ENCODE measurements at regions of chr17 and their contacts with region 1.

Region 1: GRCh38 chr17:39636927-39637736 is at the start of gene STARD3:
- DNase-seq: peak; percentile 88
- H3K4me3 ChIP-seq: peak within 1 kb of the TSS; percentile 90 to 96 (median 91)
- H3K27ac ChIP-seq: peak within 1 kb of the TSS; percentile 75
- H3K4me1 ChIP-seq: peaks cover 14% of the 10 kb centered on the region
- H3K27me3 ChIP-seq: peaks cover 0 to 3% of the 10 kb centered on the region in 2 experiments
- CTCF ChIP-seq: peak in 1 of 2 donors; percentile 5
- POLR2A ChIP-seq: peak; percentile 61
- total RNA-seq, gene STARD3: 48.9 and 51.0 TPM in 2 replicates

Region 2: DNA sequence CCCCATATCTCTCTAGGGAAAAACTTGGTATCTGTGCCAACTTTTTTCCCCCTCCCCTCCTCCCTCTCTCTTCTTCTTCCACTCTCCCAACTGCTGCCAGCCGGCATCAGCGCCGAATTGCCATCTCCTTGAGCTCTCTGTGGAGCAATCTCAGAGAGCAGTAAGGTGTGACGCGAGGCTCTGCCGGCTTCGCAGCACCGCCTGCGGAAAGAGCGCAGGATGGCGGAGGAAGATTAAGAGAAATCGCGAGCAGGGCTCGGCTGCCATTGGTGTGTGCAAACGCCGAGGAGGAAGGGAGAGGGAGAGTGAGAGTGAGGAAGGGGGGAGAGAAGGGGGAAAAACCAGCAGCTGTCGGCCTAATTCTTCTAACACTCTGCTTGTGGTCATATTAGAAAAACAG is 73.7 kb before region 1 on chr17:
- CTCF ChIA-PET with region 1: no interaction called
- POLR2A ChIA-PET with region 1: no interaction called
- dilution Hi-C with region 1: no loop called
- intact Hi-C with region 1: no loop called
- DNase-seq: peak; percentile 14
- H3K4me3 ChIP-seq: no peak overlapping the region
- H3K27ac ChIP-seq: no peak overlapping the region
- H3K4me1 ChIP-seq: no peaks in the 10 kb centered on the region
- H3K27me3 ChIP-seq: no peaks in the 10 kb centered on the region
- CTCF ChIP-seq: no peak
- POLR2A ChIP-seq: no peak

Region 3: GRCh38 chr17:39738931-39739884 is 102.1 kb after region 1 on chr17:
- CTCF ChIA-PET with region 1: no interaction called
- POLR2A ChIA-PET with region 1: no interaction called
- dilution Hi-C with region 1: loop called (anchors 10 kb)
- intact Hi-C with region 1: no loop called
- DNase-seq: no peak
- H3K4me3 ChIP-seq: no peak overlapping the region
- H3K27ac ChIP-seq: no peak overlapping the region
- H3K4me1 ChIP-seq: peaks cover 14% of the 10 kb centered on the region
- H3K27me3 ChIP-seq: peaks cover 18 to 28% of the 10 kb centered on the region in 2 experiments
- CTCF ChIP-seq: no peak
- POLR2A ChIP-seq: no peak

Region 4: GRCh38 chr17:39754161-39754951 is 117.2 kb after region 1 on chr17:
- CTCF ChIA-PET with region 1: interaction called, 3 read pairs
- POLR2A ChIA-PET with region 1: no interaction called
- dilution Hi-C with region 1: loop called (anchors 10 kb)
- intact Hi-C with region 1: loop called (anchors 5 kb)
- DNase-seq: peak; percentile 69
- H3K4me3 ChIP-seq: peak overlapping the region; percentile 54 to 71 (median 60)
- H3K27ac ChIP-seq: no peak overlapping the region
- H3K4me1 ChIP-seq: peaks cover 9% of the 10 kb centered on the region
- H3K27me3 ChIP-seq: peaks cover 8 to 15% of the 10 kb centered on the region in 2 experiments
- CTCF ChIP-seq: peak; percentile 77 to 85
- POLR2A ChIP-seq: peak; percentile 62

Measured in endothelial cell of umbilical vein (primary cell).